CD8-positive, alpha-beta memory T cell (primary cell): ENCODE measurements at regions of chr3 and their contacts with region 1.

Region 1: DNA sequence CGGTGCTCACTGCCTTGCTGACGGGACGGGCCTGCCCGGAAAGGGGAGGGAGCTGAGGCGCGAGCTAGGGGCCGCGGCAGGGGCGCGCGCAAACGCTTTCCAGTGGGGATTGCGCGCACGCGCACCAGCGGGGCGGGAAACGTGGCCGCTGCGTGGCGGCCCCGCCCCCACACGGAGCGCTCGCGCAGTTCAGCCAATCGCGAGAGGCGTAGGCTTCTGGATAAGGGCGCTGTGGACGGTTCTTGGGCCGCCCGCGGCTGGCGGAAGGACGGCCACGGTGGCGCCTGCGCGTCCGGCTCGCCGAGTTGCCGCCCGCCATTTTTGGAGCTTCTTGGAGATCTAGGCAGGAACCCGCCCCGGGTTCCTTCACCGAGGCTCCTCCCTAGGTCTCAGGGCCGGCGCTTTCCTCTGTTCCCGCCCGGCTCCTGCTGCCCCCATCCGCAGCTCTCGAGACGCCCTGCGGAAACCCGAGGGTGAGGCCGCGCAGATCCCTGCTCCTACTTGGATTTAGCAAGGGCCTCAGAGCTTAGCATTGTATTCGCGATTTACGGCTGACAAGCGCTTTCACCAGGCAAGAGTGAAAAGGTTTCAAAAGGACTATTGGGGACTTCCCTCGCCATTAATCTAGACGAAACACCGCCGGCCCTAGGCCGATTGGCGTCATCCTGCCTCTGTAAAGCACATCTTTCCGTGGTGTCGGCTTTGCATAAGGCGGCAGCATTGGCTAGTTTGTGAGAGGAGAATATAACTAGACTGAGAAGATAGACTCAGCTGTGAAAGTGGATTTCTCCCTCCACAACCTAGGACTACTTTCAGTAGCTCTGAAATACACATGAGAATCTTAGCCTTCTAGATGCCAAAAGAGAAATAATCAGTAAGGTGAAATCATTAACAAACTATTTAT is 496 bp upstream of the STAG1 start:
- DNase-seq: peak; percentile 97 to 99 (median 99)
- H3K4me3 ChIP-seq: peak overlapping the region; percentile 60
- H3K4me3 Mint-ChIP-seq: peak overlapping the region; percentile 78 to 99 (median 93)
- H3K27ac ChIP-seq: peak overlapping the region; percentile 86
- H3K27ac Mint-ChIP-seq: peak overlapping the region; percentile 93 to 100 (median 97)
- H3K4me1 ChIP-seq: peaks cover 33% of the 10 kb centered on the region
- H3K4me1 Mint-ChIP-seq: peaks cover 44 to 45% (median 45%) of the 10 kb centered on the region in 3 donors
- H3K27me3 ChIP-seq: no peaks in the 10 kb centered on the region
- H3K27me3 Mint-ChIP-seq: peaks cover 0 to 3% of the 10 kb centered on the region in 2 donors

Region 2: DNA sequence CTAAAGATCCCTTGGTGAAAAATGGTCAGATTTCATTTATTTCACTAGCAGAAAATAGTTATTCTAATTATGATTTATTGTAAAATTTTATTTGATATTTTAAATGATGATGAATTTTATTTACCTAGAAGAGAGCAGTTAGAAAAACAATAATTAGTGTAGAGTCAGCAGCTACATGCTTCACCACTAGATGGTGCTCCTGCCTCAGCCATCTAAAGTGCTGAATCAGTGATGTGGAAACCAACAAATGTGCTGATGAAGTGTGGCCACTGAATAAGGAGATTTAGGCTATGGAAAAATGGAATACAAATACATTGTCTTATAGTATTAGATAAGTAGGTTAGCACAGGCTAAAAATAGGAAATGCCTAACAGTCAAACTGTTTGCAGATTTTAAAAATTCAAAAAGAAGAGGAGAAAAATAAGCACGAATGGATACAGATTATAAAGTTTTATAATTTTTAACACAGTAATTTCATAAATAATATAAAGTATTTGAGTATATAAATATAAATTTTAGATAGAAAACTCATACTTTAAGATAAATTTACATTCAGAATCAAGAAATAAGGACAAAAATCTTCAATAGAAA is 677.4 kb before region 1 on chr3:
- CTCF ChIA-PET with region 1: interaction called, 40 read pairs
- POLR2A ChIA-PET with region 1: interaction called, 4 read pairs
- DNase-seq: peak; percentile 54 to 80 (median 59)
- H3K4me3 ChIP-seq: no peak overlapping the region
- H3K4me3 Mint-ChIP-seq: no peak overlapping the region
- H3K27ac ChIP-seq: no peak overlapping the region
- H3K27ac Mint-ChIP-seq: no peak overlapping the region
- H3K4me1 ChIP-seq: no peaks in the 10 kb centered on the region
- H3K4me1 Mint-ChIP-seq: peaks cover 3 to 5% (median 4%) of the 10 kb centered on the region in 3 donors
- H3K27me3 ChIP-seq: no peaks in the 10 kb centered on the region
- H3K27me3 Mint-ChIP-seq: peaks cover 2 to 13% of the 10 kb centered on the region in 2 donors

Region 3: DNA sequence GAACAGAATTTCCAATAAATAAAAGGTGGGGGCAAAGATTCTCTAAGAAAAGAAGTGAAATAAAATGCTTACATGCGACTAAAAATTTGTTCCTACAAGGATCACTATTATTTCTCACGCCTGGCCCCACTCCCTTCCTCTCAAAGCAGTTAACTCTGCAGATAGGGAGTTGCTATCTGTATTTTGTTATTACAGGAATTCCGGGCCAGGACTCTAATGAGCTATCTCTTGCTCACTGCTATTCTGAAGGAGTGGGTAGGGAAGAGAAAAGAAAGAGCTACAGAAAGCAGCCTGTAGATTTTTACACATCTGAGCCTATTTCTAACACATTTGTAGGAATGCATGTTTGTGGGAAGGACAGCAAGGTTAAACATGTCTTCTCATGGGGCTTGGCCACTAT is 362.1 kb before region 1 on chr3:
- CTCF ChIA-PET with region 1: interaction called, 61 read pairs
- POLR2A ChIA-PET with region 1: interaction called, 19 read pairs
- DNase-seq: no peak
- H3K4me3 ChIP-seq: no peak overlapping the region
- H3K4me3 Mint-ChIP-seq: no peak overlapping the region
- H3K27ac ChIP-seq: no peak overlapping the region
- H3K27ac Mint-ChIP-seq: peak overlapping the region in 1 of 8 donors; percentile 24
- H3K4me1 ChIP-seq: no peaks in the 10 kb centered on the region
- H3K4me1 Mint-ChIP-seq: no peaks in the 10 kb centered on the region
- H3K27me3 ChIP-seq: no peaks in the 10 kb centered on the region
- H3K27me3 Mint-ChIP-seq: no peaks in the 10 kb centered on the region

Region 4: GRCh38 chr3:136577792-136578191 is 174.9 kb before region 1 on chr3:
- CTCF ChIA-PET with region 1: interaction called, 10 read pairs
- POLR2A ChIA-PET with region 1: no interaction called
- DNase-seq: no peak
- H3K4me3 ChIP-seq: no peak overlapping the region
- H3K4me3 Mint-ChIP-seq: no peak overlapping the region
- H3K27ac ChIP-seq: no peak overlapping the region
- H3K27ac Mint-ChIP-seq: peak overlapping the region in 1 of 8 donors; percentile 25
- H3K4me1 ChIP-seq: no peaks in the 10 kb centered on the region
- H3K4me1 Mint-ChIP-seq: peaks cover 1 to 9% (median 6%) of the 10 kb centered on the region in 3 donors
- H3K27me3 ChIP-seq: no peaks in the 10 kb centered on the region
- H3K27me3 Mint-ChIP-seq: no peaks in the 10 kb centered on the region

Region 5: DNA sequence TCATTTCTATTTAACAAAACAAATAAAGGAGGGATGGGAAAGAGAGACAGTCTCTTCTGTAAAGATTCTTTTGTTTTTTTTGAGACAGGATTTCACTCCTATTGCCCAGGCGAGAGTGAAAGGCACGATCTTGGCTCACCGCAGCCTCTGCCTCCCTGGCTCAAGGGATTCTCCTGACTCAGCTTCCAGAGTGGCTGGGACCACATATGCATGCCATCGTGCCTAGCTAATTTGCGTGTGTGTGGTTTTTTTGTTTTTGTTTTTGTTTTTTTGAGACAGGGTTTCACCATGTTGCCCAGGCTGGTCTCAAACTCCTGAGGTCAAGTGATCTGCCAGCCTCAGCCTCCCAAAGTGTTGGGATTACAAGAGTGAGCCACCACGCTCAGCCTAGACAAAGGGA is 23.8 kb before region 1 on chr3:
- CTCF ChIA-PET with region 1: interaction called, 20 read pairs
- POLR2A ChIA-PET with region 1: interaction called, 4 read pairs
- DNase-seq: peak in 1 of 5 donors; percentile 14
- H3K4me3 ChIP-seq: no peak overlapping the region
- H3K4me3 Mint-ChIP-seq: peak overlapping the region; percentile 14 to 63 (median 52)
- H3K27ac ChIP-seq: no peak overlapping the region
- H3K27ac Mint-ChIP-seq: peak overlapping the region in 7 of 8 donors; percentile 7 to 77 (median 53)
- H3K4me1 ChIP-seq: peaks cover 61% of the 10 kb centered on the region
- H3K4me1 Mint-ChIP-seq: peaks cover 65 to 88% (median 81%) of the 10 kb centered on the region in 3 donors
- H3K27me3 ChIP-seq: no peaks in the 10 kb centered on the region
- H3K27me3 Mint-ChIP-seq: no peaks in the 10 kb centered on the region

Region 6: GRCh38 chr3:136861890-136862616 is 109.4 kb after region 1 on chr3 and contains the start of gene NCK1:
- CTCF ChIA-PET with region 1: interaction called, 61 read pairs
- POLR2A ChIA-PET with region 1: interaction called, 71 read pairs
- DNase-seq: peak; percentile 97 to 99 (median 99)
- H3K4me3 ChIP-seq: peak within 1 kb of the TSS; percentile 96
- H3K4me3 Mint-ChIP-seq: peak within 1 kb of the TSS; percentile 91 to 99 (median 97)
- H3K27ac ChIP-seq: peak within 1 kb of the TSS; percentile 90
- H3K27ac Mint-ChIP-seq: peak within 1 kb of the TSS; percentile 94 to 99 (median 98)
- H3K4me1 ChIP-seq: peaks cover 23% of the 10 kb centered on the region
- H3K4me1 Mint-ChIP-seq: peaks cover 50 to 78% (median 77%) of the 10 kb centered on the region in 3 donors
- H3K27me3 ChIP-seq: no peaks in the 10 kb centered on the region
- H3K27me3 Mint-ChIP-seq: peaks cover 0 to under 1% of the 10 kb centered on the region in 2 donors
- total RNA-seq, gene NCK1: 30.9 to 33.3 TPM

Region 7: GRCh38 chr3:136994772-136995516 is 242.3 kb after region 1 on chr3:
- CTCF ChIA-PET with region 1: no interaction called
- POLR2A ChIA-PET with region 1: no interaction called
- DNase-seq: no peak
- H3K4me3 ChIP-seq: no peak overlapping the region
- H3K4me3 Mint-ChIP-seq: no peak overlapping the region
- H3K27ac ChIP-seq: no peak overlapping the region
- H3K27ac Mint-ChIP-seq: peak overlapping the region in 1 of 8 donors; percentile 79
- H3K4me1 ChIP-seq: no peaks in the 10 kb centered on the region
- H3K4me1 Mint-ChIP-seq: no peaks in the 10 kb centered on the region
- H3K27me3 ChIP-seq: no peaks in the 10 kb centered on the region
- H3K27me3 Mint-ChIP-seq: no peaks in the 10 kb centered on the region

Region 8: DNA sequence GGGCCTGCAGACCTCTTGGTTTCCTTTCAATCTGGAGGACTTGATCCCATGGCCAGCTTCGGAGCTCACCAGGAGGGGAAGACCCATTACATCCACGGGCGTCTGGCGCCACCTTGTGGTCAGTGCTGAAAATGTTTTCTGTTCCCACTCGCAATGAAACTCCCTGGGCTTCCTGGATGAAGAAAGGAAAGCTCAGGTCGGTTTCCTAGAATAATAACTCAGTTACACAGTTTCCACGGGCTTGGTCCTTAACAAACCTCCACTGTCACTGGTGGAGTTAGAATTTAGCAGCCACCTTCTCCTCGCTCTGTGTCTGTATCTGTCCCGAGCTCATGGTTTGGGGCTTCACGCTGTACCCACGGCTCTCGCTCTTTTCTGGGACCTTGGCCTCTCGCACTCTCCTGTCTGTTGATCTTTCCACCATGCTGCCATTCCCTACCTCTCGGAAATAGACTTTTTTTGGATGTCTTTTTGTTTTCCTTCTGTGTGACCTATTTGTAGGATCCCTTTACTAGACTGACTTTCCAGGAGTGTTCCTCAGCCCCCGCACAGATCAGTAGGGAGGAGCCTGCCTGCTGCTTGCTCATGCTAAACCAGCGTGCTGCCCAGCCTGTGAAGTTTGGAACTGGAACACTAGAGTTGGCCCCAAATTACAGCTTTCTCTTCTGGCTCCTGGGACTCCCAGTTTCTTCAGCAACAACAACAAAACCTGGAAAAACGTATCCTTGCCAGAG is 261.4 kb after region 1 on chr3:
- CTCF ChIA-PET with region 1: interaction called, 98 read pairs
- POLR2A ChIA-PET with region 1: interaction called, 10 read pairs
- DNase-seq: peak; percentile 71 to 87 (median 77)
- H3K4me3 ChIP-seq: peak overlapping the region; percentile 63
- H3K4me3 Mint-ChIP-seq: peak overlapping the region; percentile 3 to 84 (median 76)
- H3K27ac ChIP-seq: peak overlapping the region; percentile 49
- H3K27ac Mint-ChIP-seq: peak overlapping the region in 4 of 8 donors; percentile 53 to 84 (median 69)
- H3K4me1 ChIP-seq: peaks cover 11% of the 10 kb centered on the region
- H3K4me1 Mint-ChIP-seq: peaks cover 5 to 11% (median 9%) of the 10 kb centered on the region in 3 donors
- H3K27me3 ChIP-seq: no peaks in the 10 kb centered on the region
- H3K27me3 Mint-ChIP-seq: no peaks in the 10 kb centered on the region